GM13977 (cell line): ENCODE measurements at regions of chr9 and their contacts with region 1.

Region 1: DNA sequence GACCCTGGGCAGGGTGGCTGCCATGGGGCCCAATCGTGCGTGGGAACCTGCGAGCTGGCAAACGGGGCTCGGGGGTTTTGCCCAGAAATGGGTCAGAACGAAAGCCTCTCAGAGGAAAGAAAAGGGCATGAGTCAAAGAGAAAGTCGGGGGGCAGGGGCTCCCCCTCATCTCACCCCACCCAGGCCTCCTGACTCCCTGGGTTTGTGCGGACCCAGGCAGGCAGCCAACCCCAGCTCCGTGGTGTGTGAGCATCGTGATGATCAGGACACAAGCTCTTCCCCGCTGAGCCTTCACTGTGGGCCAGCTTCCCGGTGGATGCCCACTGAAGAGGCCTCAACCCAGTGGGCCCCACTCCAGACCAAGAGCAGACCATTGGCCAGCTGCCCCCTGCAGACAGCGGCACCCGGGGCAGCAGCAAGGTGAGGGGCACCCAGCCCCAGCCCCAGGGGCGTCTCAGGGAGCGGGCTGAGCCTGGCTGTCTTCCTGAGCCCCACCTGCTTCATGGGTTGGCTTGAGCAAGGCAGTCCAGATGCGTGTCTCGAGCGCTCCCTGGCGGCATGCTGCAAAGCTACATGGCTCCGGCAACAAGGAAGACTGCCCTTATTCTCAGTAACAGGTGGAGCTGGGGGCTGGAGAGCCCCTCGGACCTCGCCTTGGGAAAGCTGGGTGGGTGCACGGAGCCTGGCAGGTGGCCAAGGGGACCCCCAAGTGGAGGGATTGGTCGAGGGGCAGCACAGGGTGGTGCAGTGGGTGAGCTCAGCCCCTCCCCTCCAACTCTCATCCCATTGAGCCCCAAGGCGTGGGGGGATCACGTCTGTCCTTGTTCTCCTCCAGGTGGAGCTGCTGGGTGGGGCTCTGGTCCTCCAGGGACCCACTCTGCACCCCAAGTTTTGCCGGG is 3.2 kb upstream of the FUT7 start:
- DNase-seq: peak; percentile 95
- CTCF ChIP-seq: peak; percentile 98

Region 2: GRCh38 chr9:136665111-136665703 is 369.9 kb before region 1 on chr9:
- in situ Hi-C with region 1: no loop called
- DNase-seq: peak; percentile 81
- CTCF ChIP-seq: peak; percentile 1

Region 3: DNA sequence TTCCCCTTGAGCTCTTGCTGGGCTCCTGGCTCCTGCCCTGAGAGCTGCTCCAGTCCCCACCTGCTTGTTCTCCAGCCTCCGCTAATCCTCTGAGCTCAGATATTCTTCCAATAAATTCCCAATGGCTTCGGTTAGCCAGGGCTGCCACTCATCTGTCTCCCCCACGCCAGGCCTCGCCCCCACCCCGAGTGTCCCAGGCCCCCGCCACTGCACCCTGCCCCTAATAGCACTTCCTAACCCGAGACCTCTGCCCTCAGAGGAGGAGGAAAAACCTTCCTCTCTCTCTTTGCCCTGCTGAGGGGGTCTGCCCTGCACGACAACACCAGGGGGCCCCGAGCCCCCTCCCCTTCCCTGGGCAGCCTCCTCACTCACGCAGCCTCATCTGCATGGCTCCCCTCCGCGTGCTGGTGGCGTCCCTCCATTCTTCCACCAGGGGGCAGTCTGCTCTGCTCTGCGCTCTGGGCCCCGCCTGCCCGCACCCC is 265.4 kb before region 1 on chr9:
- in situ Hi-C with region 1: loop called (anchors 10 kb)
- DNase-seq: peak; percentile 26
- CTCF ChIP-seq: peak; percentile 78

Region 4: GRCh38 chr9:136949817-136950655 is 85.1 kb before region 1 on chr9:
- in situ Hi-C with region 1: no loop called
- DNase-seq: peak; percentile 100
- CTCF ChIP-seq: peak; percentile 21